Cardiac septum (tissue), 1 donor: ENCODE measurements at regions of chr3 and their contacts with region 1.

Region 1: DNA sequence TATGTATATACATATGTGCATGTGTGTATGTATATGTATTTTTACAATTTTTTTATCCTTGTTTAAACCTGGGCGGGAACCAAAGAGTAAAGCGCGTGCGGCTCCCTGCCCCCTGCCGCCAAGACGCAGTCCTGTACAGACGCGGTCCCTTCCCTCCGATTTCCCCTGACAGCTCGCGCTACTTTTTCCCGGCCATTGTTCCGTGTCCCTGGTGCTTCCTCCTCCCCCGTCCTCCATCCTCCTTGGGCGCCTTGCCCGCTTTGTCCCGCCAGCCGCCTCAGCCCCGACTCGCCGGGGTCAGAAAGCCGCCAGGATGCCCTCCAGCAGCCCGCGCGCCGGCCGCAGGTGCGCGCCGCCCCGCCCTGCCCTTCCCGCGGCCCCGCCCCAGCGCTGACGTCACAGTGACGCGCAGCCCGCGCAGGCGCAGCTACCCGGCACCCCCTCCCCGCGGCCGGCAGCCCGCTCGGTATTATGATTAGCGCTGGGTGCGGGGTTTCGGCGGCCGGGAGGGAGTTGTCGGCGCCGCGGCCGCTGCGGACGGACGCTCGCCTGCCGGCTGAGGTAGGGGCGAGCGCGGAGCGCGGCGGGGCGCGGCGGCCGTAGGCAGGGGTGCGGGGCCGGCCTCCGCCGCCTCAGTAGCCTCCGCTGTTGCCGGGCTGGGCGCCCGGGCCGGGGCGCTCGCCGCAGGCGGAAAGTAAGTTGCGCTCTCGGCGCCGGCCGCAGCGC is at the start of gene SNRK:
- DNase-seq: peak; percentile 98
- total RNA-seq, gene SNRK: 25.1 TPM

Region 2: GRCh38 chr3:43105596-43106292 is 180.5 kb before region 1 on chr3 and contains the start of gene POMGNT2:
- intact Hi-C with region 1: loop called (anchors 10 kb)
- DNase-seq: peak; percentile 95
- total RNA-seq, gene POMGNT2: 15.5 TPM

Region 3: GRCh38 chr3:43223670-43224364 is 62.5 kb before region 1 on chr3:
- intact Hi-C with region 1: loop called (anchors 5 kb)
- DNase-seq: no peak

Region 4: GRCh38 chr3:43317461-43318316 is 31.4 kb after region 1 on chr3:
- intact Hi-C with region 1: loop called (anchors 2 kb)
- DNase-seq: no peak

Region 5: DNA sequence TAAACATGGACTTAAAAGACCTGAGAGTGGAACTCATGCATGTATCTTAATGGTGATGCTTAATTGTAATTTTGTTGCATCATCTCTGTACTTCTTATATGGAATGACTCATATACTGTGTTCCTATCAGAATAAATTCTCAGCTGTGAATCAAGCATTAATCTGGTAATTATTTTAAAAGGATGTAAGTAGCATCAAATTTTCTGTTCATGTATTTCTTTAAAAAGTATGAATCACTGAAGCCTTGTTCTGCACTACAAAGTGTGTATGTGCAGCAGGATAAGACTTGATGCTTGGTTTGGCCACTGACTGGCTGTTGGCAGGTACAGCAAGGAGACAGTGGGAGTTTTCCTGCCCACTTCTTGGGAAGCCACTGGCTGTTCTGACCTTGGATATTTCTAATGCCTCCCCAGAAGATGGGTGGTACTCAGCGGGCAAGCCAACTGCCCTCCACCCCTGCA is 211.7 kb after region 1 on chr3:
- intact Hi-C with region 1: loop called (anchors 1 kb)
- DNase-seq: no peak